ENCODE measurements at regions of chr13 and their contacts with region 1.

Region 1: DNA sequence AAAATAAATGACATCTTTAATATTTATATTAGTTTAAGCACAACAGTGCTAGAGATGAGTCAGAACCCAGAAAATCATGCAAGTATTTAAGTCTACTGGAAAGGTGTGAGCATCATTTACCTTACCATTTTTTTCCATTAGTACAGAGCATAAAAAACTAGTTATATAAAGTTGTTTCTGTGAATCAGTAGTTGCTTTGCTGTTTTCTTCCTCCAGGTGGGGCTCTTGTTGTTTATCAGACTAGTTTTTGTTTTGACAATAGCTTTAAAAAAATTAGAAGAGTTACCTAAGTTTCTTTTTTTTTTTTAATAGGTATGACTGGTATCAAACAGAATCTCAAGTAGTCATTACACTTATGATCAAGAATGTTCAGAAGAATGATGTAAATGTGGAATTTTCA is 12.7 kb downstream of the SUGT1 start:
- DNase-seq: no peak
- ATAC-seq: peak; percentile 34
- H3K4me3 ChIP-seq: no peak overlapping the region
- H3K27ac ChIP-seq: no peak overlapping the region
- H3K4me1 ChIP-seq: peaks cover 3% of the 10 kb centered on the region; the same call in 1 of the 2 replicates
- H3K27me3 ChIP-seq: no peaks in the 10 kb centered on the region
- CTCF ChIP-seq: peak; percentile 38 to 53 (median 52); a peak in 4 of 6 replicates
- EP300 ChIP-seq: no peak
- POLR2A ChIP-seq: no peak
- RAD21 ChIP-seq: peak; percentile 60

Region 2: DNA sequence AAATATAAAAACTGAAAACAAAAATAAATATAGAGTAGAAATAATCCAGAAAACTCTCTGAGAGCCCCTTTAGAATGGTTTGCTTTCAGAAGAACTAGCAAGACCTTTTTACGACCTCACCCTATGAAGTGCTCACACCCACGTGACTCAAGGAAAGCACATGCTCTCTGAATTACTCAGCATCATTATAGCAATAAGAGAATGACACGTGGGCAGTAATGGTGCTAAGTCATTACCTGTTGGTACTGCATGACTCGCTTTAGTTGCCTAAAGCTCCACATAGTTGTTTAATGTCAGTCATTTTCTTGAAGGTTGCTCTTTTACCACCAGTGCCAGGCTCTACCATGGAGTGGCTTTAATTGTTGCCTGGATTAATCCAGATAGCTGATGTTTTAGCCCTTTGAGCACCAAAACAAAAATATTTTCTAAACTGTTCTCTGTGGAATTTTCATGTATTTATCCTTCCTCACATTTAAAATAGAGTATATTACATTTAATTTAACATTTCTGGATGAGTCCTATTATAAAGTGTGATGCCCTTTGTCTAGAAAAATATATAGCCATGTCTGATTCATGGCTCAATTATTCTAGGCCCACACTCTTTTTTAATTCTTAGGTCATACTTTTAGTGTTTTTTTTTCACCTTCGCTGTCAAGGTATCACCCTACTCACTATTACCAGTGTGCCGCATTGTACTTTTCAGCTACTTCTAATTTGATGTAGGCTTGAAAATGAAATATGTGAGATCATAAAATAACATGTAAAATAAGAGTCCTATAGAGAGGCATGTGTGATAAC is 316.1 kb before region 1 on chr13:
- CTCF ChIA-PET with region 1: no interaction called
- POLR2A ChIA-PET with region 1: no interaction called
- RAD21 ChIA-PET with region 1: no interaction called
- SMC1A ChIA-PET with region 1: no interaction called
- in situ Hi-C with region 1: no loop called
- intact Hi-C with region 1: no loop called
- DNase-seq: no peak
- ATAC-seq: peak; percentile 65
- H3K4me3 ChIP-seq: no peak overlapping the region
- H3K27ac ChIP-seq: no peak overlapping the region
- H3K4me1 ChIP-seq: no peaks in the 10 kb centered on the region
- H3K27me3 ChIP-seq: no peaks in the 10 kb centered on the region
- CTCF ChIP-seq: no peak
- EP300 ChIP-seq: no peak
- POLR2A ChIP-seq: no peak
- RAD21 ChIP-seq: no peak

Region 3: DNA sequence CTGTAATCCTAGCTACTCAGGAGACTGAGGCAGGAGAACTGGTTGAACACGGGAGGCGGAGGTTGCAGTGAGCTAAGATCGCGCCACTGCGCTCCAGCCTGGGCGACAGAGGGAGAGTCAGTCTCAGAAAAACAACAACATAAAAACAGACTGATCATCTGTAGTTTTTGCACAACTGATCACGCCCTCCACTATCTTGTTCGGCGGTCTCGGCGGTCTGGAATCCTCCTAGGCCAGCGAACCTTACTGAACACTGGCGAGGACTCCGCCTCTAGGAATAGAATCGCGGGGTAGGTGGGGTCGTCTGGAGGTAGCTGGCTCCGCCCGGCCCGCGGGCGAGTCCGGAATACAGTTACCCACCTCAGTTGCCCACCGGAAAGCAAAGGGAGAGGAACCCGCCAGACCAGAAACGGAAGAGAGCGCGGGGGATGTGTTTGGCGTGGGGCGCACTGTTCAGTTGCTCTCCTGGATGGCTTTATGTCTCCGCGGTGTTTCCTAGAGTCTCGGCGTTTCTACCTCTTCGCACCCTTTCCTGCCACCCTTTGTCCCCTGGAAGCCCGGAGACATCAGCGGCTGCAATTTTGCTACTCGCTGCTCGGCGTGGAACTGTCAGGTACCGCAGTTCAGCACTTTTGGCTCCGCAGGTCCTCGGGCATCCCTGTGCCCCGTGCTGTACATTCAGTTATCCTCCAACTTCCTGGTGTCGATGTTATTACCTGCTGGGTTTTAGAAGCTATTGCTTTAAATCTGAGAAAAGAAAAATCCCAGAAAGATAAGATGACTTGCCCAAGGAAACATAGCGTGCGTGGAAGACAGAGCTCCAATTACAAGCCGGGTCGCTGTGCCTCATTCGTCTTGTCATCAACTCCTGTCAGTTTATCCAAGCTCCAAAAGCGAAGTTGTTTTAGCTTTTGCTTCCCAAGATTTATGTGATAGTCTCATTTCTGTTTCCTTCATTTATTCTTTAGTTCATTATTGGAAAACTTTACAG is 48.0 kb before region 1 on chr13:
- CTCF ChIA-PET with region 1: interaction called, 12 read pairs
- POLR2A ChIA-PET with region 1: interaction called, 5 read pairs
- RAD21 ChIA-PET with region 1: interaction called, 21 read pairs
- SMC1A ChIA-PET with region 1: interaction called, 20 read pairs
- in situ Hi-C with region 1: no loop called
- intact Hi-C with region 1: no loop called
- DNase-seq: peak; percentile 56
- ATAC-seq: peak; percentile 96
- H3K4me3 ChIP-seq: peak overlapping the region; percentile 98
- H3K27ac ChIP-seq: peak overlapping the region; percentile 58
- H3K4me1 ChIP-seq: peaks cover 6% of the 10 kb centered on the region; the same call in 1 of the 2 replicates
- H3K27me3 ChIP-seq: no peaks in the 10 kb centered on the region
- CTCF ChIP-seq: no peak
- EP300 ChIP-seq: no peak; a peak in 1 of 4 replicates
- POLR2A ChIP-seq: peak; percentile 86
- RAD21 ChIP-seq: 0 out of 2 replicates have a peak, but pooled peaks have one; percentile 9

Region 4: GRCh38 chr13:52686381-52686780 is 21.1 kb after region 1 on chr13:
- CTCF ChIA-PET with region 1: interaction called, 19 read pairs
- POLR2A ChIA-PET with region 1: no interaction called
- RAD21 ChIA-PET with region 1: interaction called, 7 read pairs
- SMC1A ChIA-PET with region 1: interaction called, 9 read pairs
- in situ Hi-C with region 1: no loop called
- intact Hi-C with region 1: no loop called
- DNase-seq: no peak
- ATAC-seq: no peak
- H3K4me3 ChIP-seq: no peak overlapping the region
- H3K27ac ChIP-seq: no peak overlapping the region
- H3K4me1 ChIP-seq: no peaks in the 10 kb centered on the region
- H3K27me3 ChIP-seq: no peaks in the 10 kb centered on the region
- CTCF ChIP-seq: no peak
- EP300 ChIP-seq: no peak
- POLR2A ChIP-seq: no peak
- RAD21 ChIP-seq: no peak

Region 5: GRCh38 chr13:52738719-52739467 is 73.6 kb after region 1 on chr13:
- CTCF ChIA-PET with region 1: interaction called, 66 read pairs
- POLR2A ChIA-PET with region 1: interaction called, 3 read pairs
- RAD21 ChIA-PET with region 1: interaction called, 15 read pairs
- SMC1A ChIA-PET with region 1: interaction called, 11 read pairs
- in situ Hi-C with region 1: no loop called
- intact Hi-C with region 1: loop called (anchors 2 kb)
- DNase-seq: no peak
- ATAC-seq: peak; percentile 68
- H3K4me3 ChIP-seq: no peak overlapping the region
- H3K27ac ChIP-seq: no peak overlapping the region
- H3K4me1 ChIP-seq: no peaks in the 10 kb centered on the region; the same call in 1 of the 2 replicates
- H3K27me3 ChIP-seq: peaks cover 2 to 14% of the 10 kb centered on the region in 2 experiments; a peak in 3 of 4 replicates
- CTCF ChIP-seq: peak; percentile 27 to 42 (median 27); a peak in 4 of 6 replicates
- EP300 ChIP-seq: no peak
- POLR2A ChIP-seq: no peak
- RAD21 ChIP-seq: peak; percentile 47

Region 6: GRCh38 chr13:53151336-53152056 is 486.2 kb after region 1 on chr13:
- CTCF ChIA-PET with region 1: interaction called, 34 read pairs
- POLR2A ChIA-PET with region 1: no interaction called
- RAD21 ChIA-PET with region 1: interaction called, 13 read pairs
- SMC1A ChIA-PET with region 1: interaction called, 11 read pairs
- in situ Hi-C with region 1: no loop called
- intact Hi-C with region 1: no loop called
- DNase-seq: peak; percentile 32
- ATAC-seq: peak; percentile 95
- H3K4me3 ChIP-seq: no peak overlapping the region
- H3K27ac ChIP-seq: no peak overlapping the region
- H3K4me1 ChIP-seq: no peaks in the 10 kb centered on the region
- H3K27me3 ChIP-seq: no peaks in the 10 kb centered on the region
- CTCF ChIP-seq: peak; percentile 76 to 89 (median 89)
- EP300 ChIP-seq: no peak
- POLR2A ChIP-seq: no peak
- RAD21 ChIP-seq: peak; percentile 73

Region 7: GRCh38 chr13:53301449-53301848 is 636.1 kb after region 1 on chr13:
- CTCF ChIA-PET with region 1: no interaction called
- POLR2A ChIA-PET with region 1: no interaction called
- RAD21 ChIA-PET with region 1: no interaction called
- SMC1A ChIA-PET with region 1: no interaction called
- in situ Hi-C with region 1: no loop called
- intact Hi-C with region 1: no loop called
- DNase-seq: no peak
- ATAC-seq: no peak
- H3K4me3 ChIP-seq: no peak overlapping the region
- H3K27ac ChIP-seq: no peak overlapping the region
- H3K4me1 ChIP-seq: no peaks in the 10 kb centered on the region
- H3K27me3 ChIP-seq: no peaks in the 10 kb centered on the region
- CTCF ChIP-seq: no peak
- EP300 ChIP-seq: no peak
- POLR2A ChIP-seq: no peak
- RAD21 ChIP-seq: no peak